PC-3 (cell line): ENCODE measurements at regions of chr6 and their contacts with region 1.

Region 1: GRCh38 chr6:36576561-36576960 is 17.6 kb upstream of the SRSF3 start:
- DNase-seq: no peak
- ATAC-seq: no peak
- H3K4me3 ChIP-seq: no peak overlapping the region
- H3K27ac ChIP-seq: peak overlapping the region; percentile 37; the same call in 1 of the 2 replicates
- H3K4me1 ChIP-seq: peaks cover 29% of the 10 kb centered on the region
- H3K27me3 ChIP-seq: no peaks in the 10 kb centered on the region
- CTCF ChIP-seq: no peak

Region 2: GRCh38 chr6:36536873-36537547 is 39.6 kb before region 1 on chr6:
- CTCF ChIA-PET with region 1: interaction called, 19 read pairs
- POLR2A ChIA-PET with region 1: no interaction called
- intact Hi-C with region 1: loop called (anchors 1 kb)
- DNase-seq: peak; percentile 43
- ATAC-seq: peak; percentile 70
- H3K4me3 ChIP-seq: no peak overlapping the region
- H3K27ac ChIP-seq: peak overlapping the region; percentile 18
- H3K4me1 ChIP-seq: peaks cover 14% of the 10 kb centered on the region
- H3K27me3 ChIP-seq: no peaks in the 10 kb centered on the region
- CTCF ChIP-seq: no peak

Region 3: GRCh38 chr6:36542041-36542440 is 34.5 kb before region 1 on chr6:
- CTCF ChIA-PET with region 1: interaction called, 19 read pairs
- POLR2A ChIA-PET with region 1: interaction called, 4 read pairs
- intact Hi-C with region 1: loop called (anchors 1 kb)
- DNase-seq: peak; percentile 58
- ATAC-seq: peak; percentile 51
- H3K4me3 ChIP-seq: peak overlapping the region; percentile 15; the same call in 1 of the 2 replicates
- H3K27ac ChIP-seq: peak overlapping the region; percentile 40
- H3K4me1 ChIP-seq: peaks cover 40% of the 10 kb centered on the region
- H3K27me3 ChIP-seq: no peaks in the 10 kb centered on the region
- CTCF ChIP-seq: no peak

Region 4: DNA sequence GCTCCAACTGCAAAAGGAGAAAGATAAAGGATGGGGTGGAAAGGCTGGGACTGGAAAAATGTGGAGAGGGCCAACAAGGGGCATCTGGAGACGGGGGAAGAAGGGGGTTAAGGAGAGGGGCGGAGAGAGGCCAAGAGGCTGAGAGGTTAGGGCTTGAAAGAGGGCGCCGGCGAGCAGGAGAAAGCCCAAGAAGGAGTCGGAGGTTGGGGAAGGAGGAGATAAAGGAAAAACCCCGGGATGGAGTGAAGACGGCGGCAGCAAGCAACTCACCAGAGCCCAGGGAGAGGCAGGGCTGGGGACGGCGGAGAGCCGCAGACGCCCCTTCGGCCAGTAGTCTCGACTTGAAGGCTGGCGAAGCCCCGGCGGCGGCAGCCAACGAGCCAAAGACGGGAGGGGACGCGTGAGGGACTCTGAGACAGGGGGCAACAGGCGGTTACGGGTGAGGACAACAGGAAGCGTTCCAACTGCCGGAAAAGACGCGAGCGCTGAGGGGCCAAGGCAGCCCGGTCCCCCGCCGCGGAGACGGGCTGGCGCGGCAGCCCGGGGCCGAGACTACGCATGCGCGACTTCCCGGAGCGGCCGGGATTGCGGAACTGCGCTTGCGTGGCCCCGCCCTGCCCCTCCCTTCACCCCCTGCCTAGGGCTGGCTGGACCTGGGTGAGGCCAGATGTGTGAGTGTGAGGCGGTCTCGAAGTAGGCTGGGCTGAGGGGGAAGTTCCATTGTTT is 29.5 kb before region 1 on chr6 and contains the start of gene STK38:
- CTCF ChIA-PET with region 1: no interaction called
- POLR2A ChIA-PET with region 1: interaction called, 4 read pairs
- intact Hi-C with region 1: loop called (anchors 1 kb)
- DNase-seq: peak; percentile 89
- ATAC-seq: peak; percentile 91
- H3K4me3 ChIP-seq: peak within 1 kb of the TSS; percentile 94
- H3K27ac ChIP-seq: peak within 1 kb of the TSS; percentile 55
- H3K4me1 ChIP-seq: peaks cover 34% of the 10 kb centered on the region
- H3K27me3 ChIP-seq: no peaks in the 10 kb centered on the region
- CTCF ChIP-seq: peak; percentile 52
- total RNA-seq, gene STK38: 25.7 and 26.9 TPM in 2 replicates

Region 5: DNA sequence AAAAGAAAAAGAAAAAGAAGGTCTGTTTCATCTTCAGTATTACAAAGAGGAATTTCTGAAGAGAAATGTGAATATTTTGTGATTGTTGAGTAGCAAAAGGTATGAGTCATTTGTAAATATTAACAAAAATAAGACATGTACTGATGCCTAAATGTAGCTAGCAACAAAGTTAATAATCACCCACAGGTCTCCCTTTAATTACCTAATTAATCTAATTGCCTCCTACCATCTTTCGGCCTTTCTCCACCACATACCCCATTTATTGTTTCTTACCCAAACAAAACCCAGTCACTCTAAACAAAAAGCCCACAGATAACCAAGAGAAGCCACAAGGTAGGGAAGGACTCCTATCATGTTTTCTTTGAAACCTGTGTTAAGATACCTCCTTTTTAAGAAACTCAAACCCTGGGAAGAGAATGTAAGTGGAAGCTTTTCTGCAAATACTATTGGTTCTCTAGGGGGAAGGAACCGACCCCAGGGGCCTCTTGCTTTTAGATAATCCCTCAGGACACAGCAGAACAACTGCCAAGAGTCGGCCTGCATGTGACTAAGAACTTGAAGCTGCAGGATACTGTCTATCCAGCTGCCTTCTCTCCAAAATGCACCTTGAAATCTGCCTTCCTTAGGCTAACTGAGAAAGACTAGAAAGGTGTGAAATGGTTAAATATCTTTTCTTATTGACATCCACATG is 13.2 kb before region 1 on chr6:
- CTCF ChIA-PET with region 1: no interaction called
- POLR2A ChIA-PET with region 1: no interaction called
- intact Hi-C with region 1: loop called (anchors 1 kb)
- DNase-seq: no peak
- ATAC-seq: peak; percentile 40
- H3K4me3 ChIP-seq: no peak overlapping the region
- H3K27ac ChIP-seq: no peak overlapping the region
- H3K4me1 ChIP-seq: peaks cover under 1% of the 10 kb centered on the region; the same call in 1 of the 2 replicates
- H3K27me3 ChIP-seq: no peaks in the 10 kb centered on the region
- CTCF ChIP-seq: no peak